Kidney (tissue), 22 donors: ENCODE measurements at regions of chr1 and their contacts with region 1.

Region 1: GRCh38 chr1:2381741-2382620 is 9.4 kb downstream of the MORN1 start:
- DNase-seq: peak; percentile 81 to 95 (median 87)
- H3K4me3 ChIP-seq: no peak overlapping the region
- H3K27ac ChIP-seq: no peak overlapping the region
- H3K4me1 ChIP-seq: peaks cover 0 to 3% (median 0%) of the 10 kb centered on the region in 3 donors
- H3K27me3 ChIP-seq: no peaks in the 10 kb centered on the region
- CTCF ChIP-seq: peak; percentile 84

Region 2: GRCh38 chr1:2194898-2195673 is 186.9 kb before region 1 on chr1:
- intact Hi-C with region 1: loop called (anchors 5 kb)
- DNase-seq: peak; percentile 92 to 98 (median 93)
- H3K4me3 ChIP-seq: peak overlapping the region in 2 of 3 donors; percentile 58 to 71
- H3K27ac ChIP-seq: peak overlapping the region; percentile 89 to 93
- H3K4me1 ChIP-seq: peaks cover 0 to 36% (median 4%) of the 10 kb centered on the region in 3 donors
- H3K27me3 ChIP-seq: no peaks in the 10 kb centered on the region
- CTCF ChIP-seq: peak; percentile 90

Region 3: GRCh38 chr1:2205191-2205952 is 176.6 kb before region 1 on chr1:
- intact Hi-C with region 1: no loop called
- DNase-seq: peak; percentile 93 to 99 (median 96)
- H3K4me3 ChIP-seq: peak overlapping the region in 1 of 3 donors; percentile 49
- H3K27ac ChIP-seq: peak overlapping the region; percentile 86 to 88
- H3K4me1 ChIP-seq: peaks cover 0 to 52% (median 39%) of the 10 kb centered on the region in 3 donors
- H3K27me3 ChIP-seq: no peaks in the 10 kb centered on the region
- CTCF ChIP-seq: no peak

Region 4: GRCh38 chr1:3113047-3113740 is 731.2 kb after region 1 on chr1:
- intact Hi-C with region 1: no loop called
- DNase-seq: no peak
- H3K4me3 ChIP-seq: no peak overlapping the region
- H3K27ac ChIP-seq: no peak overlapping the region
- H3K4me1 ChIP-seq: peaks cover 0 to 6% (median 0%) of the 10 kb centered on the region in 3 donors
- H3K27me3 ChIP-seq: no peaks in the 10 kb centered on the region
- CTCF ChIP-seq: no peak